ENCODE measurements at regions of chr14 and their contacts with region 1.

Region 1: GRCh38 chr14:65958664-65959562 is 527.3 kb upstream of the CCDC196 start:
- DNase-seq: no peak
- ATAC-seq: peak in 2 of 4 donors; percentile 53 to 58
- H3K4me3 ChIP-seq: no peak overlapping the region
- H3K27ac ChIP-seq: no peak overlapping the region
- H3K4me1 ChIP-seq: peaks cover 0 to 6% (median 0%) of the 10 kb centered on the region in 12 donors
- H3K27me3 ChIP-seq: peaks cover 0 to 6% (median 0%) of the 10 kb centered on the region in 9 donors
- CTCF ChIP-seq: peak; percentile 31 to 62 (median 50)
- POLR2A ChIP-seq: no peak

Region 2: GRCh38 chr14:65169351-65169750 is 789.6 kb before region 1 on chr14:
- intact Hi-C with region 1: loop called in 9 of 10 experiments (anchors 2 to 10 kb)
- DNase-seq: no peak
- ATAC-seq: peak; percentile 28 to 83 (median 68)
- H3K4me3 ChIP-seq: no peak overlapping the region
- H3K27ac ChIP-seq: peak overlapping the region in 7 of 12 donors; percentile 32 to 54 (median 46)
- H3K4me1 ChIP-seq: peaks cover 0 to 11% (median 2%) of the 10 kb centered on the region in 12 donors
- H3K27me3 ChIP-seq: peaks cover 0 to 16% (median 6%) of the 10 kb centered on the region in 9 donors
- CTCF ChIP-seq: no peak
- POLR2A ChIP-seq: no peak

Region 3: DNA sequence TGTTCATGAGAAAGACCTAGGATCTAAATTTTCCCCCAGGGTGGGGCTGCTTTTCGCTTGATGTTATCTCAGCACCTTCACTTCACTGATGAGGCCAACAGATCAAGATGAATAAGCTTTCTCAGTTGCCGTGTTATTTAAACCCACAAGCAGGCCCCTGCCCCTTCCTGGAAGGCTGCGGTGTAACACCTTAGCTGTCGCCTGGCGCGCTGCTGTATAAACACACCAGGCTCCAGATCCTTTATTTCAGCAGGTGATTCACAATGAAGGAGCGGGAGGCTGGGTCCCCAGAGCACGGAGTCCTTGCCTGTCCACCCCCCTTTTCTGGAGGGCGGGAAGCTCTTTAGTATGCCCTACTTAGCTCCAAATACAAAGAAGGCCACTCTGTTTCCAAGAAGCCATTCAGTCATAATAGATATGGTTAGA is 31.0 kb before region 1 on chr14:
- intact Hi-C with region 1: no loop called
- DNase-seq: no peak
- ATAC-seq: no peak
- H3K4me3 ChIP-seq: no peak overlapping the region
- H3K27ac ChIP-seq: peak overlapping the region in 1 of 12 donors; percentile 11
- H3K4me1 ChIP-seq: no peaks in the 10 kb centered on the region
- H3K27me3 ChIP-seq: peaks cover 0 to 27% (median 3%) of the 10 kb centered on the region in 9 donors
- CTCF ChIP-seq: no peak
- POLR2A ChIP-seq: no peak

Region 4: DNA sequence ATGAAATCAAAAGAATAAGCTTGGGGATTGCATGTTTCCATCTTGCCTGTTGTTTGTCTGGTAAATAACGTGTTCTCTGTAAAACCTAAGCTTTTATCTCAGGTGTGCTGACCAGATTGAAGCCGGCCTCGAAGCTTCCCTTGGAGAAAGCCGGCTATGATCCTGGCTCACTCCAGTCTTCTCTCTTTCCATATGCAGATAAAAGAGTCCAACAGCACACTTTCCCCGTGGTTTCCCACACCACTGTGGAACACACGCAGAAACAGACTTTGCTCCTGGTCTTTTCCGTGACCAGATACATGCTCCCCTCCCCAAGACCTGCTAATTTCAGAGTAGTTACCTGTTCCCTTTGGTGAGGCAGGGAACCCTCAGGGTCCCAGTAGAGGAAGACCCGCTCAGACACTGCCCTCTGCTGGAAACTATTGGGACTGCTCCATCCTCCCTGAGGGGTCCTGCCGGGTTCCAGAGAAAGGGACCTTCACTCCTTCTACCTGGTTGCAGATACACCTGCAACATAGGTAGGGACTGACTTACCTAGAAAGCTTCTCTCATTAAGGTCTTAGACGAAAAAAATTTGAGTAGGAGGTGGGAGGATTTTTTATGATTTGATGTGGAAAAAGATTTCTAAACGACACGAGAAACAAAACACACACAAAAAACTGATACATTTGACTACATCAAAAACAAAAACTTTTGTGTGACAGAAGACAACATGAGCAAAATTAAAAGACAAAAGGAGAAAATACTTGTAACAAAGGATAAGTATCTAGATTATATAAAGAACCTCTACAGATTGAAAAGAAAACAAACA is 111.8 kb after region 1 on chr14:
- intact Hi-C with region 1: loop called in 8 of 10 experiments (anchors 2 to 10 kb)
- DNase-seq: peak in 2 of 5 donors; percentile 18 to 34
- ATAC-seq: peak in 3 of 4 donors; percentile 49 to 67 (median 58)
- H3K4me3 ChIP-seq: no peak overlapping the region
- H3K27ac ChIP-seq: no peak overlapping the region
- H3K4me1 ChIP-seq: no peaks in the 10 kb centered on the region
- H3K27me3 ChIP-seq: peaks cover 0 to 4% (median 0%) of the 10 kb centered on the region in 9 donors
- CTCF ChIP-seq: peak; percentile 63 to 85 (median 76)
- POLR2A ChIP-seq: no peak

Measured in heart left ventricle (tissue), 16 donors.